OCI-LY7 (cell line): ENCODE measurements at regions of chr3 and their contacts with region 1.

Region 1: GRCh38 chr3:115819785-115820384 is 196.6 kb downstream of the GAP43 start:
- DNase-seq: peak; percentile 80
- H3K4me3 ChIP-seq: no peak overlapping the region
- H3K27ac ChIP-seq: no peak overlapping the region
- H3K4me1 ChIP-seq: no peaks in the 10 kb centered on the region
- CTCF ChIP-seq: peak; percentile 100

Region 2: GRCh38 chr3:115217678-115218451 is 602.0 kb before region 1 on chr3:
- CTCF ChIA-PET with region 1: no interaction called
- POLR2A ChIA-PET with region 1: no interaction called
- intact Hi-C with region 1: loop called (anchors 10 kb)
- DNase-seq: peak; percentile 27
- H3K4me3 ChIP-seq: no peak overlapping the region
- H3K27ac ChIP-seq: no peak overlapping the region
- H3K4me1 ChIP-seq: no peaks in the 10 kb centered on the region
- CTCF ChIP-seq: peak; percentile 74